ENCODE measurements at regions of chr7 and their contacts with region 1.

Region 1: GRCh38 chr7:2354186-2354938 is at the start of gene EIF3B:
- DNase-seq: peak; percentile 84 to 88
- H3K4me3 ChIP-seq: peak within 1 kb of the TSS; percentile 75
- H3K27ac ChIP-seq: peak within 1 kb of the TSS; percentile 92
- H3K4me1 ChIP-seq: peaks cover 27% of the 10 kb centered on the region
- H3K27me3 ChIP-seq: no peaks in the 10 kb centered on the region
- CTCF ChIP-seq: no peak
- total RNA-seq, gene EIF3B: 299 and 302 TPM in 2 replicates

Region 2: DNA sequence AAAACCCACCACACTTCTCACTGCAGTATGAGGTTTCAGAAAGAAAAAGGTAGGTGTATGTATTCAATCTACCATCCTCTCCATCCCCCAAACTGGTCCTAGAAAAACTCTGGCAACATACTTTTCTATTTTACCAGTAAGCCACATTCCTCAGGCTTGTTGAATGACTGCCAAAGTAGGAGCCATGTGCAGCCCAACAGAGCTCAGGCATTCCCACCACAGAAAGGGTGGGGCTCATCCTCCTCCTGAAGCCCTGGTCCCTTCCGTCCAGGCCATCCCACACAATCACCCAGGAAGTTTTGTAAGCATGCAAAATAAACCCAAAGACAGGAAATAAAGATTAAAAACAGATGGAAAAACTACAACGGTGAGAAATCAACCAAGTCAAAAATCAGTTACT is 178.8 kb before region 1 on chr7:
- CTCF ChIA-PET with region 1: no interaction called
- POLR2A ChIA-PET with region 1: interaction called, 13 read pairs
- intact Hi-C with region 1: no loop called
- DNase-seq: peak; percentile 53 to 84
- H3K4me3 ChIP-seq: no peak overlapping the region
- H3K27ac ChIP-seq: no peak overlapping the region
- H3K4me1 ChIP-seq: no peaks in the 10 kb centered on the region
- H3K27me3 ChIP-seq: no peaks in the 10 kb centered on the region
- CTCF ChIP-seq: no peak

Region 3: GRCh38 chr7:2241580-2242540 is 112.5 kb before region 1 on chr7 and contains the starts of genes MRM2 and NUDT1:
- CTCF ChIA-PET with region 1: no interaction called
- POLR2A ChIA-PET with region 1: no interaction called
- intact Hi-C with region 1: loop called (anchors 2 kb)
- DNase-seq: peak; percentile 83 to 93
- H3K4me3 ChIP-seq: peak within 1 kb of the TSS; percentile 94
- H3K27ac ChIP-seq: peak within 1 kb of the TSS; percentile 20; the same call in 1 of the 2 replicates
- H3K4me1 ChIP-seq: peaks cover 26% of the 10 kb centered on the region
- H3K27me3 ChIP-seq: no peaks in the 10 kb centered on the region
- CTCF ChIP-seq: no peak
- total RNA-seq, gene MRM2: 36.8 and 40.9 TPM in 2 replicates
- total RNA-seq, gene NUDT1: 63.9 and 73.3 TPM in 2 replicates

Region 4: GRCh38 chr7:2336626-2337299 is 17.6 kb before region 1 on chr7:
- CTCF ChIA-PET with region 1: no interaction called
- POLR2A ChIA-PET with region 1: interaction called, 15 read pairs
- intact Hi-C with region 1: no loop called
- DNase-seq: no peak
- H3K4me3 ChIP-seq: no peak overlapping the region
- H3K27ac ChIP-seq: no peak overlapping the region
- H3K4me1 ChIP-seq: no peaks in the 10 kb centered on the region
- H3K27me3 ChIP-seq: no peaks in the 10 kb centered on the region
- CTCF ChIP-seq: no peak

Region 5: GRCh38 chr7:2709553-2710285 is 355.4 kb after region 1 on chr7:
- CTCF ChIA-PET with region 1: no interaction called
- POLR2A ChIA-PET with region 1: no interaction called
- intact Hi-C with region 1: no loop called
- DNase-seq: peak in 1 of 2 experiments; percentile 85
- H3K4me3 ChIP-seq: no peak overlapping the region
- H3K27ac ChIP-seq: no peak overlapping the region
- H3K4me1 ChIP-seq: no peaks in the 10 kb centered on the region
- H3K27me3 ChIP-seq: no peaks in the 10 kb centered on the region
- CTCF ChIP-seq: peak; percentile 66